Thyroid gland (tissue), 4 donors: ENCODE measurements at regions of chr2 and their contacts with region 1.

Region 1: DNA sequence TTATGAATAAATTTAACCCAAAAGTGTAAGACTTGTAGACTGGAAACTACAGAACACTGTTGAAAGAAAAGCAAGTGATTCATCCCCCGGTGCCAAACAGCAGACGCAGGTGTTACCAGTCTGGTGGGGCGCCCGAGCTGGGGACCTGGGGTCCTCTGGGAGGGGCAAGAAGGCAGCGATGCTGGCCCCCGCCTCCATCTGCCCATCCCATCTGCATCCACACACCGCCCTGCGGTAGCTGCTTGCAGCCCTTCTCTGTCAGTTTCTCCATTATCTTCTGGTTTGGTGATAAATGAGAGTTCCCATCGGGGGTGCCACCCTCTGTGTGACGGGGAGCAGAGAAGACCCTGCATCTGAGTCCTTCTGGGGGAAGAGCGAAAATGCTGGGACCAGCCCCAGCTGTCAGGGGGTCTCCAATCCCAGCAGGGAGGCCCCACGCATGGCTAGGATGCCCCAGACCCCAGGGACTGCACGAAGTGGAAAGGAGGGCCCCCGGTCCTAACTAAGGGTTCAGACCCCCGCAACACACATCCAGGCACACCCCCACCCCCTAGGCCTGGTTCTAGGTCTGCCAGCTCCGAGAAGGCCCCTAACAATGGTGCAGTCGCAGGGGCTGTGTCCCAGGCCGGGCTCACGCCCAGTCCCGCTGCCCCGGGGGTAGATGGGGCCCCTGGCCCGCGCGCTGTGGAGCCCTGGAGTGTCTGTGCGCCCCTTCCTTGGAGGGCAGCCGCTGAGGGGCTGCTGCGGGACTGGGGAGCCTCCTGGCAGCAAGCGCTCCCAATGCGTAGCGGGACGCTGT is 686 bp upstream of the RGPD8 start:
- DNase-seq: no peak
- H3K4me3 ChIP-seq: no peak overlapping the region
- H3K27ac ChIP-seq: no peak overlapping the region
- H3K4me1 ChIP-seq: peaks cover 0 to 7% of the 10 kb centered on the region in 2 donors
- H3K27me3 ChIP-seq: no peaks in the 10 kb centered on the region
- CTCF ChIP-seq: no peak
- POLR2A ChIP-seq: no peak

Region 2: DNA sequence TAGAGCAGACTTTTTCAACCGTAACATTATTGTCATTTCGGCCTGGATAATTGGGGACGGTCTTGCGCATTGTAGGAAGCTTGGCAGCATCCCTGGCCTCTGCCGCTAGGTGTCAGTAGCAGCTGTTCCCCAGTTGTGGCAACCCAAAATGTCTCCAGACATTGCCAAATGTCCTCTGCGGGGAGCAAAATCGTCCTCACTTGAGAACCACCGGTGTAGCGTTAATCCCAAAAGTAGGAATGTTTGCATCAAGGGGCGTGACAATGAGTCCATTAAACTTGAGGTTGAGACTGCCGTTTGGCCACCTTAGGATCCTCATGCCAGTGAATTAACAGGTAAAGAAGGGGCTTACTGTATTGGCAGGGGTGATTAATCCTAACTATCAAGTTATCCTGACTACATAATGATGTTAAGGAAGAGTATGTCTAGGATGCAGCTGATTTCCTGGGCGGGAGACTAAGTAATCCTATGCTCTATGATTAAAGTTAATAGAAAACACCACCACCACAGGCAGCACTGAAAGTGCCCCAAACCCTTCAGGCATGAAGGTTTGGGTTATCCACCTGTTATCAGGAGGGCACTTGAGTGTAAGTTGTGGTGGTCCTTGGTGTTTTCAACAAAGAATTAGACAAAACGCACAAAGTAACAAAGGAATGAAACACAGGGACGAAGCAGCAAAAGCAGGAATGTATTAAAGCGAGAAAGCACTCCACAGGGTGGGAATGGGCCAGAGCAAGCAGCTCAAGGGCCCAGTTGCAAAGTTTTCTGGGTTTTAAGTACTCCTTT is 174.4 kb before region 1 on chr2:
- intact Hi-C with region 1: loop called (anchors 5 kb)
- DNase-seq: peak; percentile 82 to 87
- H3K4me3 ChIP-seq: no peak overlapping the region
- H3K27ac ChIP-seq: no peak overlapping the region
- H3K4me1 ChIP-seq: peaks cover 3 to 4% of the 10 kb centered on the region in 2 donors
- H3K27me3 ChIP-seq: no peaks in the 10 kb centered on the region
- CTCF ChIP-seq: peak; percentile 85 to 96 (median 92)
- POLR2A ChIP-seq: no peak

Region 3: GRCh38 chr2:112614201-112614840 is 180.2 kb after region 1 on chr2:
- intact Hi-C with region 1: no loop called
- DNase-seq: no peak
- H3K4me3 ChIP-seq: no peak overlapping the region
- H3K27ac ChIP-seq: no peak overlapping the region
- H3K4me1 ChIP-seq: no peaks in the 10 kb centered on the region
- H3K27me3 ChIP-seq: no peaks in the 10 kb centered on the region
- CTCF ChIP-seq: no peak
- POLR2A ChIP-seq: no peak